Activated T-helper 2 cell treated with anti-CD3 and anti-CD28 coated beads, Interferon-gamma antibody, Interleukin-2, Interleukin-4, amounts not matched to agents 10 μg/mL and 5 μg/mL and 100 μg/mL, durations not matched to agents 14 hours and 24 hours and 36 hours (primary cell): ENCODE measurements at regions of chr3 and their contacts with region 1.

Region 1: GRCh38 chr3:187745201-187746058 is at the start of gene BCL6:
- DNase-seq: peak; percentile 90
- H3K4me3 Mint-ChIP-seq: peak within 1 kb of the TSS; percentile 94
- H3K27ac Mint-ChIP-seq: peak within 1 kb of the TSS; percentile 99
- H3K4me1 Mint-ChIP-seq: peaks cover 55% of the 10 kb centered on the region
- H3K27me3 Mint-ChIP-seq: no peaks in the 10 kb centered on the region
- total RNA-seq, gene BCL6: 12.0 and 16.5 TPM in 2 replicates

Region 2: GRCh38 chr3:187719628-187720336 is 25.6 kb before region 1 on chr3:
- intact Hi-C with region 1: no loop called
- DNase-seq: no peak
- H3K4me3 Mint-ChIP-seq: no peak overlapping the region
- H3K27ac Mint-ChIP-seq: no peak overlapping the region
- H3K4me1 Mint-ChIP-seq: no peaks in the 10 kb centered on the region
- H3K27me3 Mint-ChIP-seq: no peaks in the 10 kb centered on the region

Region 3: GRCh38 chr3:187870360-187871203 is 125.2 kb after region 1 on chr3:
- intact Hi-C with region 1: loop called (anchors 2 kb)
- DNase-seq: no peak
- H3K4me3 Mint-ChIP-seq: no peak overlapping the region
- H3K27ac Mint-ChIP-seq: peak overlapping the region; percentile 82
- H3K4me1 Mint-ChIP-seq: peaks cover 32% of the 10 kb centered on the region
- H3K27me3 Mint-ChIP-seq: no peaks in the 10 kb centered on the region

Region 4: DNA sequence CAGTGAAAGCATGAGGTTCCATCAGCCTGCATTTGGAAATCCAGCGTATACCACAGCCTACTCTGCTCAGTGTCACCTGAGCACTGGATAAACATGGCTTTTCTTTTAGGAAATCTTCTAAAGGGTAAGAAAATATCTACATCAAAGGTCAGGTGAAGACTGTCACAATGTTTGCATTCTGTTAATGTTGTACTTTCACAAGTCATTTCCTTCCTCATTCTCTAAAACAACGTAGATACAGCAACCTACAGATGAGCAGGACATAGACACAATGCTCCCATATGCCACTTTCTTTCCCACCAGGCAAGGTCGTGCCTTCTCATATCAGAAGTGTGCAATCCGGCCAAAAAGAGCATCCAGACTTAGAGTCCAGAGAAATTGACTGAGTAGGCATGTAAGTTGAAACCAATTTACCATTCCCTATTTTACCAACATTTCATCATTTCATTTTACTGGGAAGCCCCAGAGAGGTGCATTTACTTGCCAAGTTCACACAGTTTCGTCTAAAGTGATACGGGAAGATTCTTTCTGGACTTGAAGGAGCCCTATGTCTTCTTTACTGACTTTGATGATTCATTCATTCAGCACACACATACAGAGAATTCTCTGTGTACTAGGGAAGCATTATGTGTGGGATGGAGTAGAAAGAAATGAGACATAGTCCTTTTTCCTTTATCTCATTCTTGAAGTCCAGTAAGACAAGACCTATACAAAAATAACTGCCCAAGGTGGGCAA is 377.9 kb after region 1 on chr3:
- intact Hi-C with region 1: loop called (anchors 1 kb)
- DNase-seq: no peak
- H3K4me3 Mint-ChIP-seq: no peak overlapping the region
- H3K27ac Mint-ChIP-seq: peak overlapping the region; percentile 48
- H3K4me1 Mint-ChIP-seq: peaks cover 19% of the 10 kb centered on the region
- H3K27me3 Mint-ChIP-seq: peaks cover 10% of the 10 kb centered on the region

Region 5: DNA sequence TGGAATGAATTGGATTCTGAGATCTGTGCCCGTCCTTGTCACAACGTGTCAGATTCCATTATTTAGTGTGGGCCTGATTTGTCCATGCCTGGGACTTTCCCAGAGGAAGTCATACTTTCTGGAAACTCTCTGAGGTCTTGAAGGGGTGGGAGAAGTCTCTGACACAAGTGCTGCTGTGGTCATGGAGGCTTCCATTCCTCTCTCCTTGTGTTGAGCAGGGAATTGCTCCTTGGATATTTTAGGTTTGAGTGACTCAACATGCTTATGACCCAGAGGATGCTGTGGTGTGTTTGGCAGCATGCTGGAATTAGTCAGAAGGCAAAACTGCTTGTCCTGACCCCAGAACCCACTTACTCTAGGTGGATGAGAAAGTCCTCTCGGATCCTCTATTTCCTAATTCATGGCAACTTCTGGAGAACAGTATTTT is 540.7 kb after region 1 on chr3:
- intact Hi-C with region 1: loop called (anchors 1 kb)
- DNase-seq: no peak
- H3K4me3 Mint-ChIP-seq: no peak overlapping the region
- H3K27ac Mint-ChIP-seq: peak overlapping the region; percentile 5
- H3K4me1 Mint-ChIP-seq: peaks cover 52% of the 10 kb centered on the region
- H3K27me3 Mint-ChIP-seq: no peaks in the 10 kb centered on the region

Region 6: DNA sequence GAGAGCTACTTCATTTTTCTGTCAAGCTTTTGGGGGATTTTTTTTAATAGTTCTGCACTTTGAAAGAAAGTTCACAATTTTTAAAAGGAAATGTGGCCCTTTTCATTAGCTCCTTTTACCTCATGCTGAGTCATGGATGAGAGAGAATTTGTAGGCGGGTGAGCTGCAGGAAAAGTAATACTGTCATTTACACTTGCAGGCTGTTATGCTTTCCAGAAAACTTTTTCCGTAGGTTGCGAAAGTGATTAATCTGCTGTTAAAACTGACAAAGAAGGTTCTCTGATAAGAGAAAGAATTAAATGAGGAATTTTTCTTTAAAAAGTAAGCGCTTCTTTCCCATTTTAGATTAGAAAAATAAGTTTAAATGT is 838.7 kb after region 1 on chr3:
- intact Hi-C with region 1: loop called (anchors 2 kb)
- DNase-seq: no peak
- H3K4me3 Mint-ChIP-seq: peak overlapping the region; percentile 13
- H3K27ac Mint-ChIP-seq: peak overlapping the region; percentile 86
- H3K4me1 Mint-ChIP-seq: peaks cover 30% of the 10 kb centered on the region
- H3K27me3 Mint-ChIP-seq: no peaks in the 10 kb centered on the region